Right ventricle myocardium inferior (tissue), 1 donor: ENCODE measurements at regions of chr18 and their contacts with region 1.

Region 1: DNA sequence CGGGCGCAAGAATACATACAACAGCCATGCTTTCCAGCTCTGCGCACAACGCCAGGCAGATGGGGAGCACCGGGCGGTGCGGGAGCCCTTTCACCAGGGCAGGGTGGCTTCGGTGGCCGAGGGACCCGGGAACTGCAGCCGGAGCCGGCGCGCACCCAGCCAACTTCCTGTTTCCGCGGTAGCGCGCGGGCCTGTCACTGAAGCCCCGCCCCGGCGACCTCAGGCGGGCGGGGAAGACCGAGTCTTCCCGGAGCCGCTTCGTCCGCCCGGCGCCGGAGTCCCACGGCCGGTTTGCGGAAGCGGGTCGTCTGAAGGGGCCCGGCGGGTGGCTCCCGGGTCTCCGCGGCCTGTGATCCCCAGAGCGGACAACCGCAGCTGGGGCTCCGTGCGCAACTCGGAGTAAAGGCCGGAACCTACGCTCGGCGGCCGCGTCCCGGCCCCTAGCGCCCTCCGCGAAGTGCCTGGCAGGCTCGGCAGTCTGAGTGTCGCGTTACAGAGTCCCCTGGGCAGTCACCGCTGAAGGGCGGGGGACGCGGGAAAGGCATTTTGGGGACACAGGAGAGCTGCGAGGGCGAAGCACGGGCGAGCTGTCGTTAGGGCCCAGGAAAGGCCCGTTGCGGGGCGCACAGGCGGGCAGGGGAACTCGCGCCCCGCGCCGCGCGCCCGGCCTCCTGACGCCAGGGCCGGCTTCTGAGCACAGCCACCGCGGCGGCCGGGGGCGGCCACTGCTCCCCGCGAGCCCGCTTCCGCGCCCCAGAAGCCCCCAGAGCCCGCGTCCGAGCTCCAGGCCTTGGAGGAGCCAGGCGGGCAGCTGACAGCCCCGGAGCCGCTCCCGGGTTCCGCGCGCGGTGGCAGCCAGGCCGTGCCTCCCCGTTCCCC is at the start of gene MPPE1:
- DNase-seq: peak; percentile 97
- ATAC-seq: peak; percentile 97
- total RNA-seq, gene MPPE1: 34.5 TPM

Region 2: GRCh38 chr18:11851146-11851805 is 57.1 kb before region 1 on chr18 and contains the start of gene CHMP1B:
- intact Hi-C with region 1: loop called (anchors 2 kb)
- DNase-seq: peak; percentile 100
- ATAC-seq: peak; percentile 98
- total RNA-seq, gene CHMP1B: 28.6 TPM

Region 3: DNA sequence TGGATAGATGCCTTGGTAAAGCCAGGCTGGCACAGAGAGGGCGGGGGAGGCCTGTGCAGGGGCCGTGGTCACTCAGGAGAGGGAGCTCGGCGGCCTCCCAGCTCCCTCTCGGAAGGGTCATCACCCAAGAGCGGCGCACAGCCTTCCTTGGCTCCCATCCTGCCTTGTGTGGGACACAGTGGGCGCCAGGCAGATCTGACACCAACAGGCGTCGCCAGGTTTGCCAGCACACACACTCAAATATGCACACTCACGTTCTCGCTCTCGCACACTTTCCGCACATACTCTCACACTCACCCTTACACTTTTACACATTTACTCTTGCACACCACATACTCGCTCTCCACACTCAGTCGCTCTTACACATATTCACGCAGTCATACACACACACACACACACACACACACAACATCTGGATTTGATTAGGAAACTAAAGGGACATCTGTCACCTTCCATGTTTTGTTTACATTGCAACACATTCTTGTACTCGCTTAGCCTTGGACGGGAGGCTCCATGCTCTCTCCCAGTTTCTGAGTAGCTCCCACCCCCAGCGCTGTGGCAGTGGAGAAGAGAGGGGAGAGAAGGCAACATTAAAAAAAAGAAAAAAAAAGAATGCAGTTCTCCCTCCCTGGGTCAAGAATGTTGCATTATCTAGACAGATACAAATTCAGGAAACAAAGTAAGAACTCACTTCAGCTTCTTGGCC is 46.7 kb before region 1 on chr18:
- intact Hi-C with region 1: no loop called
- DNase-seq: peak; percentile 48
- ATAC-seq: no peak

Region 4: GRCh38 chr18:12038639-12039417 is 130.4 kb after region 1 on chr18:
- intact Hi-C with region 1: no loop called
- DNase-seq: peak; percentile 92
- ATAC-seq: peak; percentile 97